MCF 10A (cell line): ENCODE measurements at regions of chr14 and their contacts with region 1.

Region 1: GRCh38 chr14:93234798-93235197 is 27.7 kb downstream of the UBR7 start:
- DNase-seq: peak; percentile 66
- H3K4me3 Mint-ChIP-seq: peak overlapping the region; percentile 14
- H3K27ac Mint-ChIP-seq: peak overlapping the region; percentile 1
- H3K4me1 Mint-ChIP-seq: peaks cover 12% of the 10 kb centered on the region
- H3K27me3 Mint-ChIP-seq: no peaks in the 10 kb centered on the region
- CTCF ChIP-seq: no peak

Region 2: GRCh38 chr14:93543766-93544165 is 309.0 kb after region 1 on chr14:
- CTCF ChIA-PET with region 1: interaction called, 3 read pairs
- POLR2A ChIA-PET with region 1: no interaction called
- intact Hi-C with region 1: loop called (anchors 1 kb)
- DNase-seq: peak; percentile 35
- H3K4me3 Mint-ChIP-seq: no peak overlapping the region
- H3K27ac Mint-ChIP-seq: no peak overlapping the region
- H3K4me1 Mint-ChIP-seq: no peaks in the 10 kb centered on the region
- H3K27me3 Mint-ChIP-seq: peaks cover 34% of the 10 kb centered on the region
- CTCF ChIP-seq: peak; percentile 43

Region 3: DNA sequence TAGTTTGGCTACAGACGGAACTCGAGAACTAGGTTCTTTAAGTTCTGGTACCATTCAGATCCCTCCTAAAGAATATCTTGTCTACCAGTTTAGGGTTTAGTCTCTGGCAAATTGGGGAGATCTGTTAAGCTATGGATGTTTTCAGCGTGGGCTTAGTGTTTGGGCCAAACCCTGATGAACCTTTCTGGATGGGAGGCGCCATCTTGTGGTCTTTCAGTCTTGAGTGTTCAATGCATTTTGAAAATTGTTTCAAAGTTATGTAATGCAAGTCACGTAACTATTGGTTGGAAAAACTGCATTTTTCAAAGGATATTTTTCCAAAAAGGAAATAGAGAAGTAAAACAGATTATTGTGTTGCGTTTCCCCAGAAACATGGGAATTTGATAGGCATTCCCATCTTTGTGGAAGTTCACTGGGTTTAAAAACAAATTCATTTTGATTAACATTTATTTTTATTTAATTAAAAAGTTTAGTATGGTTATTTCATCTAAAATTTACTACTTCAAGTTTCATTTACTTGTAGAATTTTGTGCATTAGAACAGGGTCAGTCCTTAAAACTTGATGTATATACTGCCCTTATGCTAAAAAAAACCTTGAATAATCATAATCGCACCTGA is 384.5 kb after region 1 on chr14:
- CTCF ChIA-PET with region 1: interaction called, 3 read pairs
- POLR2A ChIA-PET with region 1: no interaction called
- intact Hi-C with region 1: loop called (anchors 1 kb)
- DNase-seq: peak; percentile 56
- H3K4me3 Mint-ChIP-seq: no peak overlapping the region
- H3K27ac Mint-ChIP-seq: no peak overlapping the region
- H3K4me1 Mint-ChIP-seq: no peaks in the 10 kb centered on the region
- H3K27me3 Mint-ChIP-seq: peaks cover 45% of the 10 kb centered on the region
- CTCF ChIP-seq: peak; percentile 50